ENCODE measurements at regions of chr21 and their contacts with region 1.

Region 1: GRCh38 chr21:32604464-32604863 is 7.7 kb downstream of the CFAP298 start:
- DNase-seq: no peak
- ATAC-seq: no peak
- H3K4me3 Mint-ChIP-seq: no peak overlapping the region
- H3K27ac Mint-ChIP-seq: no peak overlapping the region
- H3K4me1 Mint-ChIP-seq: no peaks in the 10 kb centered on the region
- H3K27me3 Mint-ChIP-seq: no peaks in the 10 kb centered on the region

Region 2: GRCh38 chr21:31866077-31866511 is 738.4 kb before region 1 on chr21:
- CTCF ChIA-PET with region 1: no interaction called
- POLR2A ChIA-PET with region 1: no interaction called
- intact Hi-C with region 1: loop called in 1 of 2 experiments (anchors 5 kb)
- DNase-seq: peak; percentile 88
- ATAC-seq: peak; percentile 83
- H3K4me3 Mint-ChIP-seq: no peak overlapping the region
- H3K27ac Mint-ChIP-seq: no peak overlapping the region
- H3K4me1 Mint-ChIP-seq: no peaks in the 10 kb centered on the region
- H3K27me3 Mint-ChIP-seq: peaks cover 24% of the 10 kb centered on the region